PC-9 (cell line): ENCODE measurements at regions of chr2 and their contacts with region 1.

Region 1: DNA sequence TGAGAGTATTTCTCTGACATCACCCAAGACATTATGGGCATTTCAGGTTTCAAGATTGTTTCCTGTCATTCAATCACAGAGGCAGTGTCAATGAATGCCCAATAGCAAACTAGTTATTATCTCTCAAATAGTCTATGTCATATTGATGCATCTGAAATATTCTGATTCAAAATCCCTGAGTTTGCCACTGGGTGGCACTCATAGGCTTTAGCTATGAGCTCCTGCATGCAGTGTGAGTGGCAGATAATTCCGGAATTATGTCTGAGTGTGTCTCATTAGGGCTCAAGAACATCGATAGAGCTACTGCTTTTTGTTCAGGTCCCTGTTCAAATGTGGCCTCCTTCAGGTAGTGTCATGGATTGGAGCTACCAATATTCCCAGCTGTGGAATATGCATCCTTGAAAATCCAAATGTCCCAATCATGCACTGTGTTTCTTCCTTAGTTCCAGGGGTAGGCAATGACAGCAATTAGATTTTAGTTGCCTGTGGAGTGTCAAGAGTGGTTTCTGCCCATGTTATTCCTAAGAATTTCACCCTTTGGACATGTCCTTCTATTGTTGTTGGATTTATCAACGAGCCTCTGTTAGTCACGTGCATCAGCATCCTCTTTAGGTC is 7.8 kb upstream of the OR6B3 start:
- DNase-seq: peak; percentile 54 to 55
- H3K4me3 ChIP-seq: no peak overlapping the region
- H3K27ac ChIP-seq: no peak overlapping the region
- H3K4me1 ChIP-seq: no peaks in the 10 kb centered on the region
- H3K27me3 ChIP-seq: peaks cover 90% of the 10 kb centered on the region
- CTCF ChIP-seq: peak; percentile 84

Region 2: DNA sequence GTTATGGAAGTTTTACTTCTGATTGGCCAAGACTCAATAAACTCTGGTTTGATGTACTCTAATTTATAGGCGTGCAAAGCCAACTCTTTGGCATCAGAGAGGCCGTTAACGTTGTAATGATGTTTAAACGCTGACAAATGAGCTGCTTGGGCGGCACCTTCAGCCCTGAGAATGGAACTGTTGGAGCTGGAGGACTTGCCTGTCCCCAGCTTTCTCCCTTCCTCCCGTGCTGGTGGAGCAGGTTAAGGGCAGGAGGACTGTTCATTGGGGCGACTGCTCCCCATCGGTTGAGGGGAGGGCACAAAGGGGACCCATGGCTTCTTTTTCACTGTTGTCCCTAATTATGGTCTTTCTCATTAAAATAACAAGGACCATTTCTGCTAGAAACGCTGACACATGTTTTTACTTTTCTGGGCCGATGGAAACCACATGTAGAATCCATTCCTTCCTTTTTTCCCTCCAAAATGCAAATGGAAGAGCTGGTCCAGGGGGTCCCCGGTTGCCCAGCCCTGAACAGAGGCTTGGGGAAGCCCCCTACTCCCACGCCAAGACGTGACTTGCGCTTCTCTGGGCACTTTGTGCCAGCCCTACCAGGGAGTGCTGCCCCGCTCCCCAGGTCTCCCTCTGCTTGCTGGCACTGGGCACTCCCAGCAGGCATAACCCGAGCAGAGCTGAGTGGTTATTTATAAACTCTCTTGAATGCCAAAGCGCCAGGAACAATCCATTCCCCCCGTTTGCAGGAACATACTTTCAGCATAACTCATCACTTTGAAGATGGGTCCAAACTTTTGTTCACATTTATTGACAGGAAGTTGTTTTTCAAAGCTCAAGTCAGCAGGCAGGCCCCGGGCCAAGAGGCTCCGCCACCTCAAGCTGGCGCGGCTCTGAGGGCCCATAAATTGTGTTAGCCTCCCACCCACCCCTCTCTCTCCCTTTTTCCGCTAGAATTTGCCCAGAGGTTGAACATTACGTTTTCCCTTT is 1464.2 kb before region 1 on chr2:
- CTCF ChIA-PET with region 1: no interaction called
- POLR2A ChIA-PET with region 1: no interaction called
- intact Hi-C with region 1: no loop called
- DNase-seq: peak; percentile 67 to 74
- H3K4me3 ChIP-seq: no peak overlapping the region
- H3K27ac ChIP-seq: no peak overlapping the region
- H3K4me1 ChIP-seq: peaks cover 6% of the 10 kb centered on the region; the same call in 1 of the 2 replicates
- H3K27me3 ChIP-seq: peaks cover 75% of the 10 kb centered on the region
- CTCF ChIP-seq: no peak

Region 3: DNA sequence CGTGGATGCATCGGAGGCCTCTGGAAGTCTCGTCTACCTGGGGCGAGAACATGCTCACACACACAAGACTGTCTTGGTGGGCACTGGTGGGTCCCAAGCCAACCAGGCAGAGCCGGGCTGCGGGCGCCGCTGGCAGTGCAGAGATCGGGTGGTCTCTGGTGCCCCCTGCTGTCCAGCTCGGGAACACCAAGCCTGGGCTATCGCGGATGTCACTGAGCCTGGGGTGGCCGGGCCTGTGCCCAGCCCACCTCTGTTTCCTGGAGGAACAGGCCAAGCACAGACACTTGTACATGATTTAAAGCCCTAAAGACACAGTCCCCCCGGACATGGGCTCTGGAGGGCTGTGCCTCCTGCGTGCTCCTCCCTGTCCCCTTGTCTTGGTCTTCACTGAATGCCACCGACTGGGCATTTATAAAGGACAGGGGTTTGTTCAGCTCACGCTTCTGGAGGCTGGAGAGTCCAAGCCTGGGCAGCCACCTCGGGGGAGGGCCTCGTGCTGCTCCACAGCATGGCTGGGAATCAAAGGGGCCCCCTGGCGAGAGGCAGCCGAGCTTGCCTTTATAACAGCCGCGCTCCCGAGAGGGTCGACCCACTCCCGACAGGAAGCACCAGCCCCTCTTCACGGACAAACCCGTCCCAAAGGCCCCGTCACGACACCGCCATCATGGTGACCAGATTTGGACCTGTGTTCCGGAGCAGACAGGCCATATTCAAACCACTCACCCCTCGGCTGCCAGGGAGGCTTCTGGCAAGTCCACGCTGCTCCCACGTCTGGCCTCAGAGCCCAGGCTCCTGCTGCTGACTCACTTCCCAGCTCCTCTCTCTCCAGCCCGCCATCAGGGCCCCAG is 82.9 kb after region 1 on chr2:
- CTCF ChIA-PET with region 1: interaction called, 10 read pairs
- POLR2A ChIA-PET with region 1: no interaction called
- intact Hi-C with region 1: loop called (anchors 1 kb)
- DNase-seq: peak; percentile 45 to 87
- H3K4me3 ChIP-seq: no peak overlapping the region
- H3K27ac ChIP-seq: no peak overlapping the region
- H3K4me1 ChIP-seq: no peaks in the 10 kb centered on the region
- H3K27me3 ChIP-seq: peaks cover 59% of the 10 kb centered on the region
- CTCF ChIP-seq: peak; percentile 98

Region 4: DNA sequence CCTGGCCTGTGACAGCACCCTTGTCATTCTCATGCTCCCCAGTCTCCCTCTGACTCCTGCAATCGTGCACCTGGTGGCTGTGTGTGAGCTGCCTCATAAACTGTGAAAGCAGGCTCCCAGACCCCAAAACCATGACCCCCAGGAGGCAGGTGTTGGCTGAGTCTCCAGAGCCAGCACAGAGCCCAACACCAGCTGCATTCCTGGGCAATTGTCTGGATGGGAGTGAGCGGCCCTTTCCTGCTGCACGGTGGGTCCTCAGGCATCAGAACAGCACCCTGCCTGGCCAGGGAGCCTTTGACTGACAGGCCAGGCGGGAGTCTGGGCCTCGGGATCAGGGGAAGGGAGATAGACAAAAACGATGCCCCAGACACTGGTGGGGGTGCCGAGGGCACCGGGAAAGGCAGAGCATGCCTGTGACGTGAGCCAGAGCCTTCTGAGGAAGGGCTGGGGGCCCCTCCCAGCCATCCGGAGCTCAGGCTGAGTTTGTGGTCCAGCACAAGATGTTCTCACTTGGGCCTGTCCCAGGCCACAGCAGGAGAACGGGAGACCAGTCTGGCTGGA is 239.3 kb after region 1 on chr2:
- CTCF ChIA-PET with region 1: no interaction called
- POLR2A ChIA-PET with region 1: no interaction called
- intact Hi-C with region 1: no loop called
- DNase-seq: no peak
- H3K4me3 ChIP-seq: no peak overlapping the region
- H3K27ac ChIP-seq: no peak overlapping the region
- H3K4me1 ChIP-seq: no peaks in the 10 kb centered on the region
- H3K27me3 ChIP-seq: peaks cover 36% of the 10 kb centered on the region
- CTCF ChIP-seq: no peak

Region 5: GRCh38 chr2:240452457-240453256 is 391.6 kb after region 1 on chr2:
- CTCF ChIA-PET with region 1: no interaction called
- POLR2A ChIA-PET with region 1: no interaction called
- intact Hi-C with region 1: loop called (anchors 10 kb)
- DNase-seq: peak; percentile 58 to 97
- H3K4me3 ChIP-seq: peak overlapping the region; percentile 60; the same call in 1 of the 2 replicates
- H3K27ac ChIP-seq: no peak overlapping the region
- H3K4me1 ChIP-seq: peaks cover 44% of the 10 kb centered on the region
- H3K27me3 ChIP-seq: no peaks in the 10 kb centered on the region
- CTCF ChIP-seq: no peak

Region 6: GRCh38 chr2:240499309-240500301 is 438.5 kb after region 1 on chr2:
- CTCF ChIA-PET with region 1: interaction called, 4 read pairs
- POLR2A ChIA-PET with region 1: no interaction called
- intact Hi-C with region 1: loop called (anchors 2 kb)
- DNase-seq: no peak
- H3K4me3 ChIP-seq: no peak overlapping the region
- H3K27ac ChIP-seq: no peak overlapping the region
- H3K4me1 ChIP-seq: no peaks in the 10 kb centered on the region
- H3K27me3 ChIP-seq: no peaks in the 10 kb centered on the region
- CTCF ChIP-seq: no peak

Region 7: GRCh38 chr2:240840435-240841080 is 779.5 kb after region 1 on chr2:
- CTCF ChIA-PET with region 1: interaction called, 5 read pairs
- POLR2A ChIA-PET with region 1: no interaction called
- intact Hi-C with region 1: loop called (anchors 1 kb)
- DNase-seq: peak; percentile 71 to 88
- H3K4me3 ChIP-seq: no peak overlapping the region
- H3K27ac ChIP-seq: no peak overlapping the region
- H3K4me1 ChIP-seq: no peaks in the 10 kb centered on the region
- H3K27me3 ChIP-seq: peaks cover 87% of the 10 kb centered on the region
- CTCF ChIP-seq: peak; percentile 80